Dorsolateral prefrontal cortex (tissue), 120 donors: ENCODE measurements at regions of chr1 and their contacts with region 1.

Region 1: GRCh38 chr1:222064388-222065211 is 322.7 kb upstream of the DUSP10 start:
- DNase-seq: no peak
- H3K4me3 ChIP-seq: no peak overlapping the region
- H3K27ac ChIP-seq: no peak overlapping the region
- H3K27me3 ChIP-seq: peaks cover 0 to 3% (median 0%) of the 10 kb centered on the region in 45 donors
- CTCF ChIP-seq: no peak

Region 2: DNA sequence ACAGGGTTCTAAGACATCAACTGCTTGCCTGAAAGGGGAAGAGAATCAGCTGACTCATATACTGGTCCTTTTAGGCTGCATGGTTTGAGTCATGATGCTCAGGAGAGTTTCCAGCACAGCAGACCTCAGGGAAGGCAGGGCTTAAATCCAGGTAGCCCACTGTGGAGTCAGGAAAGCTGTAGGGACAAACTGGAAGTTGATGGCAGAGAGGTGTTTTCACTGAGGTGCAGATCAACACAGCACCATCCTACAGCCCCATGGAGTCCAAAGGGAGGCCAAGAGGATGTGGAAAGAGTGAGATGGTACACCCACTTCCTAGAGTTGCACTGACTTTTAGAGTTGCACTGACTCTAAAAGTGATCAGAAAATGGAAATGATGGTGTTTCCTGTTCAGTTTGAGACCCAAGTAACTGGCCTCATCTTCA is 70.3 kb before region 1 on chr1:
- intact Hi-C with region 1: loop called in 1 of 2 experiments (anchors 10 kb)
- DNase-seq: no peak
- H3K4me3 ChIP-seq: no peak overlapping the region
- H3K27ac ChIP-seq: peak overlapping the region in 56 of 59 donors; percentile 14 to 99 (median 89)
- H3K27me3 ChIP-seq: no peaks in the 10 kb centered on the region
- CTCF ChIP-seq: no peak